ENCODE measurements at regions of chr19 and their contacts with region 1.

Region 1: DNA sequence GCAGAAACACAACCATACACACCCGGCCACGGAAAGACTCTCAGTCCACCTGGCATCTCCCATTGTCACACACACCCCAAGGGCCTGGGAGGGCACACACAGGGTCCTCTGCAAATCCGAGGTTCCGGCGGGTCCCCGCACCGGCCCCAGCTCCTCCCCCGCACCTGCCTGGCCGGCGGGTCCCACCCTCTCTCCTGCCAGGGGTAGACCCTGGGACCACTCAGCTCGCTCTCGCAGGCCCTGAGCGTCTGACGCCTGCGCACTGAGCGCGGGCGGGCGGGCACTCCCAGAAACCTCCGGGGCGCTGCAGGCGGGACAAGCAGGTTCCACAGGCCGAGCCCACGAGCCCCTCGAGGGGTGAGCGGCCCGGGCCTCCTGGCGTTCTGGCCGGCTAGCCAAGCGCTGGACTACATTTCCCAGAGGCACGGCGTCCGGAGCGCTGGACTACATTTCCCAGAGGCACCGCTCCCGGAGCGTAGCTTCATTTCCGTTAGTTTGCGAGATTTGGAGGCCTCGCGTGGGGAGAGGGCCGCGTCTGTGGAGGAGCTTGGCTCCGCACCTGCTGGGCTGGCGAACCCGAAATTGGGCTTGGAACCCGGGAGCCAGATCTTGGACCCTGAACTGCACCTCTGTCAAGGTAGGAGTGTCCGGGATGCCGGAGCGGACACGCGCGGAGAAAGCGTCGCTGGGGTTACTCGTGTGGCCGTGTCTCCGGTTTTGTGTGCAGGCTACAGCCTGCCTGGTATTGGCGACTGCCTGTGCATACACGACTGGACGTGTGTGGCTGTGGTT is at the start of gene ZNF420:
- DNase-seq: peak; percentile 77 to 96
- H3K4me3 ChIP-seq: peak within 1 kb of the TSS; percentile 84 to 87
- H3K27ac ChIP-seq: peak within 1 kb of the TSS; percentile 87 to 91
- H3K4me1 ChIP-seq: peaks cover 6 to 7% of the 10 kb centered on the region in 2 donors
- H3K27me3 ChIP-seq: no peaks in the 10 kb centered on the region
- CTCF ChIP-seq: no peak
- total RNA-seq, gene ZNF420: 69.9 TPM

Region 2: DNA sequence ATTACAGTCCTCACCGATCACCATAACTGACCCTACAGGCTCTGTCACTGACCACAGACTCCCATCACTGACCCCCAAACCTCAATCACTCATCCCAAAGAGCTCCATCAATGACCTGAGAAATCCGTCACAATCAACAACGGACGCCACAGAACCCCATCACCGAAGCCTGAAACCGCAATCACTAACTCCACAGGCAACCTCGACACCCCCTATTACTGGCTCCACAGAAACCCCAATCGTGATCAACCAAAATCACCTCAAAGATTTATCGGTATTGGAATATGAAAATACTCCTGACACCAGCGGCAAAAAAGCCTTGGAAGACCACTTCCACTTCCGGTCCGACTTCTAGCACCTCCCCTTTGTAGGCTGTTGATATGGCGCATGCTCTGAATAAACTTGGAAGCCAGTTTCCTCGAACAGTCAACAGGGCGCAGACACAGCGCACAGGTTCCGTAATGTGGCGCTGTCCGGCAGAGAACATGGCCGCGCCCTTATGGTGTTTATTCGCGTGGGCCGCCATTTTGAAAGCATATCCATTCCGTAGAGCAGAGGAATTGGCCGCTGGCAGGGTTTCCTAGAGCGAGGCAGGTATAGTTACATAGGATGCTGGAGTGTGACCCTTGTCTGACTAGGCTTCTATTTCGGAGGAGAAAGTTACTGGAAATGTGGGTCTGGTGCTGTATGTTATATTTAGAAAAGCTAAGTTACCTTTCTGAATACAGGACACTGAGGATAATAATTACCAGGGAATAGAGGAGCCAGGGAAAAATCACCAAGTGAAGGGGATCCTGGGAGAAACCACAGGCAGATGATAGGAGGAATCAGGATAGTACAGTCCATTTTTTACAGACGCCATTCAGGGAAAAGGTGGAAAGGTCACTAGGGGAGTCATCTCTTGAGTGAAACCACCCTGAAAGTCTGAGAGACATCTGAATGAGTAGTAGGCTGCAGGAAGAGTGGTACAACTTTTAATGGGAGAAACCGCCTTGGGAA is 94.5 kb after region 1 on chr19 and contains the start of gene ZNF585A:
- intact Hi-C with region 1: loop called (anchors 2 kb)
- DNase-seq: peak; percentile 85 to 97
- H3K4me3 ChIP-seq: peak within 1 kb of the TSS; percentile 59 to 65
- H3K27ac ChIP-seq: peak within 1 kb of the TSS; percentile 62 to 68
- H3K4me1 ChIP-seq: no peaks in the 10 kb centered on the region
- H3K27me3 ChIP-seq: no peaks in the 10 kb centered on the region
- CTCF ChIP-seq: peak in 1 of 3 experiments; percentile 35
- total RNA-seq, gene ZNF585A: 8.4 TPM

Measured in ascending aorta (tissue), 2 donors.